Mammary epithelial cell (primary cell): ENCODE measurements at regions of chr9 and their contacts with region 1.

Region 1: GRCh38 chr9:118522093-118523028 is 818.2 kb downstream of the TLR4 start:
- DNase-seq: peak; percentile 45
- H3K4me3 ChIP-seq: no peak overlapping the region
- H3K27ac ChIP-seq: no peak overlapping the region
- H3K4me1 ChIP-seq: no peaks in the 10 kb centered on the region
- H3K27me3 ChIP-seq: peaks cover 3% of the 10 kb centered on the region
- CTCF ChIP-seq: peak; percentile 67 to 80

Region 2: DNA sequence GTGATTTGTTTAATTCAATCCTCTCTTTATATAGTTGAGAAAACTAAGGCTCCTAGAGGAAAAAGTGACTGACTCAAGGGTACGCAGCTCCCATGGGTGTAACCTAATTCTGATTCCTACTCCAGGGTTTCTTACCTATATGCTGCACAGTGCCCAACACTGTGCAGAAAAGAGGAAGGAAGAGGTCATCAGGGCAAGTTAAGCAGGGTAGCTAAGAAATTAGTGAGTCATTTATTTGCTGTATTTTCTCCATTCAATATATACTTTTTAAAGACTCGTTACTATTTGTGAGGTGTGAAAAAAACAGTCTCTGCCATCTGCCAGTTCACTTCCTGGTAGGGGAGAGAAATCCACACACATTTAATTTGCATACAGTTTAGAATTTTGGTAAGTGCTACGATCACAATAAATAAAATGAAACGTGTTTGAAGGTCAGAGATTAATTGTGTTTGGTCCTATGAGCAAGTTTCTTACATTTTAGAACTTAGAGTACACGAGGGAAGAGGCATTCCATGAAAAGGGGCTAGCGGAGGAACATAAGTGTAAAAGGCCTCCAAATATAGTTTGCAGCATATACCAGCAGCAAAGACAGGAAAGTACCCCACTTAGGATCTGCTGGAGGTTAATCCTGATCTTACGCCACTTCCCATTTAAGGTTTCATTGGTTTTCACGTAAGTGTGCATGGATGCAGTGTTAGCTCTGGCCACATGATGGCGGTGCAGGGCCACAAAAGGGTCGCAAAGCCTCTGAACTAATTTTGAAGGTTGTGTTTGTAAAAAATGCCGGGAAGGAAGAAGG is 878.0 kb before region 1 on chr9:
- CTCF ChIA-PET with region 1: no interaction called
- dilution Hi-C with region 1: no loop called
- in situ Hi-C with region 1: no loop called
- intact Hi-C with region 1: loop called (anchors 2 kb)
- DNase-seq: peak; percentile 55
- H3K4me3 ChIP-seq: peak overlapping the region; percentile 5 to 36 (median 24)
- H3K27ac ChIP-seq: no peak overlapping the region
- H3K4me1 ChIP-seq: no peaks in the 10 kb centered on the region
- H3K27me3 ChIP-seq: peaks cover 5% of the 10 kb centered on the region
- CTCF ChIP-seq: peak; percentile 98 to 99

Region 3: GRCh38 chr9:118170032-118170955 is 352.1 kb before region 1 on chr9:
- CTCF ChIA-PET with region 1: no interaction called
- dilution Hi-C with region 1: no loop called
- in situ Hi-C with region 1: no loop called
- intact Hi-C with region 1: loop called (anchors 1 kb)
- DNase-seq: peak; percentile 53
- H3K4me3 ChIP-seq: no peak overlapping the region
- H3K27ac ChIP-seq: no peak overlapping the region
- H3K4me1 ChIP-seq: no peaks in the 10 kb centered on the region
- H3K27me3 ChIP-seq: no peaks in the 10 kb centered on the region
- CTCF ChIP-seq: peak; percentile 87 to 91

Region 4: DNA sequence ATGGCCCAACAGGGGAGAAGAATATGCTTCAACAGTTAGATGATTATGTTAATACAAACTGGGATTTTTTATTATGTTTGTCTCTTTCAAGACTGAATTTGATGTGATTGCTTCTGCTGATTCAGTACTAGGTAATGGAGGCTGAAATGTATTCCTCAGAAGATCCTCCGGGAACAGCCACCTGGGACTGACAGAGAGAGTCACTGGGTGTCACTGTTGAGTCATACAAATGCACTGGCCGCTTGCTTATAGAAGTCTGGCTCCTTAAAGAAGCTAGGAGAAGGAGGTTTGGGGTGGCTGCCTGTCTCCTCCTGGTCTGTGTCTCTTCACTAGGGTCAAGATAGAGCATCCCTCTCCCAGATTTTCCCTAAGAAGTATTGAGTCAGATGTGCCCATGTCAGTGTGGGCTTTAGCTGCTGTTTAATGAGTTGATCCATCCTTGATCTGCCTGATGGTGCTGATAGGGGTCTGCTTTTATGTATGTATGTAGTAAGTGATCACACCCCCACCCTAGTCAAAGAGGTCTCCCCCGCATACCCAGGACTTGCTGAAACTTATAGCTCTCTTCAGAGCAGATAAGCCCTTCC is 73.5 kb after region 1 on chr9:
- CTCF ChIA-PET with region 1: no interaction called
- dilution Hi-C with region 1: no loop called
- in situ Hi-C with region 1: no loop called
- intact Hi-C with region 1: loop called (anchors 1 kb)
- DNase-seq: peak; percentile 60
- H3K4me3 ChIP-seq: no peak overlapping the region
- H3K27ac ChIP-seq: no peak overlapping the region
- H3K4me1 ChIP-seq: no peaks in the 10 kb centered on the region
- H3K27me3 ChIP-seq: no peaks in the 10 kb centered on the region
- CTCF ChIP-seq: peak; percentile 60 to 77

Region 5: DNA sequence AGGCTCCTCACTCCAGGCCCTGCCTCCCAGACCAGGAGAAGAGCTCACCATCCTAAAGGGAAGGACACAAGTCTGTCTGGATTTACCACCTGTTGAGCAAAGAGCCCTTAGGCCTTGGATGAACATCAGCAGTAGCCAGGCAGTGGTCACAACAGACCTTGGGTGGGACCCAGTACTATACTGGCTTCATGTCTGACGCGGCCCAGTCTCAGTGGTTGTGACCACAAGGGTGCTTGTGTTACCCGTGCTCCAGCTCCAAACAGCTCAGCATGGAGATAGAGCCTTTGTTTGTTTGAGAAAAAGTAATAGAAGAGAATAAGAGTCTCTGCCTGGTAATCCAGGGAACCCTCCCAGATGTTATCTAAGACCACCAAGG is 229.5 kb after region 1 on chr9:
- CTCF ChIA-PET with region 1: no interaction called
- dilution Hi-C with region 1: no loop called
- in situ Hi-C with region 1: no loop called
- intact Hi-C with region 1: loop called (anchors 1 kb)
- DNase-seq: no peak
- H3K4me3 ChIP-seq: no peak overlapping the region
- H3K27ac ChIP-seq: no peak overlapping the region
- H3K4me1 ChIP-seq: no peaks in the 10 kb centered on the region
- H3K27me3 ChIP-seq: no peaks in the 10 kb centered on the region
- CTCF ChIP-seq: no peak

Region 6: DNA sequence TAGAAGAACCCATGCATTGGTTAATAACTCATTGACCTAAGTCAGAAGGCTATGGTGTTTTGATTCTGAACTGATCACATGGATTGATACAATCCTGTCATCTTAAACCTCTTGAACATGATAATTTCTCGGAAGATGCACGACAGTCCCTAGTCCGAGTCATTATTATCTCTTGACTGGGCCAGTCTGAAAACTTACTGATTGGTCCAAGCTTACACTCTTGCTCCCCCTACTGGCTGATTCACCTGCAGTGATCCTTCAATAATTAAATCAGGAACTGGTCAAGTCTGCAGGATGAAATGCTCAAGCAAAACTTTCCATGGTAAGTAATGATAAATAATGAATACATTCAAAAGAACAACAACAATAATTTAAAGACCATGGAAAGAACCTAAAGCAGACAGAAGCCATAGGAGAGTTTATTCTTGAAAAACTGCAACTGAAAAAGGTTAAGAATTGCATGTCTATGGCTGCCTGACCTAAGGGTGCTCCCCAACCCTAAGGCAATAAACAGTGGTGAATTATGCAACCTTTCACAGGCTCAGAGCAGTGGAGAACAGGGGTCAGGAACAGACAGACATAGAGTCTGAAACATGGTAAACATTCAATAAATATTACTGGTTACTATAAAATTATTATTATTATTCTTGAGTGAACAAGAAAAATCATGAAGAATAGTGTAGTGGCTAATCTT is 767.5 kb after region 1 on chr9:
- CTCF ChIA-PET with region 1: no interaction called
- dilution Hi-C with region 1: no loop called
- in situ Hi-C with region 1: no loop called
- intact Hi-C with region 1: loop called (anchors 2 kb)
- DNase-seq: peak; percentile 50
- H3K4me3 ChIP-seq: no peak overlapping the region
- H3K27ac ChIP-seq: no peak overlapping the region
- H3K4me1 ChIP-seq: no peaks in the 10 kb centered on the region
- H3K27me3 ChIP-seq: no peaks in the 10 kb centered on the region
- CTCF ChIP-seq: peak; percentile 49 to 66